HCT116 (cell line): ENCODE measurements at regions of chr1 and their contacts with region 1.

Region 1: DNA sequence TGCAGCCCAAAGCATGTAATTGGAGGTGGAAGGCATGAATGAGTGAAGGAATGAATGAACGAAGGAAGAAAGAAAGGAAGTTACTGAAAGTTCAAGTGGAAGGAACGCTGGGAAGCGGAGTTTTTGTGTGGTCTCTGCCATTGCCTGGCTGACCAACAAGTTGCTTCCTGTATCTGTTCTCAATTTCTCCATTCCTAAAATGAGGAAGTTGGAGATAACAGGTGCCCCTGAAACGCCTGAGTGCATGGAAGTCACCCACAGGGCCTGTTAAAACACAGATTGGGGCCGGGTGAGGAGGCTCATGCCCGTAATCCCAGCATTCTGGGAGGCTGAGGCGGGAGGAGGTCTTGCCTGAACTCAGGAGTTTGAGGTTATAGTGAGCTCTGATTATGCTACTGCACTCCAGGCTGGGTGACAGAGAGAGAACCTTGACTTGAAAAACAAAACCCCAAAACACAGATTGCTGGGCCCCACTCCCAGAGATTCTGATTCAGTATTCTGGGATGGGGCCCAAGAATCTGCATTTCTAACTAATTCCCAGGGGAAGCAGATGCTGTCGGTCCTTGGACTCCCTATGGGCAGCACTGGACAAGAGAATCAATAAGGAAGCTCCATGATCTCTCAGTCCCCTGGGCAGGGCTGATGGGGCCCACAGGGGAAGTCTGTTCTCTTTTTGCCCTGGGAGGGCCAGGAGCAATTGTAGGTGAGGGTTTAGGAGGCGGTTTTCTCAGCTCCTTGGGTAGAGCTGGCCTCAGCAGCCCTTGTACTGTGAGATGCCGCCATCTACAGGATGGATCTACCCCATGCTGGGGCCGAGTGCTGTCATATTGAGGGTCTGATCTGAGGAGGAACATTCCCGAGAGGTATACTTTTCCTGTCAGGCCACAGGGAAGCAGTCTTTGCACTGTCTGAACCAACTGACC is 3.3 kb upstream of the CNR2 start:
- DNase-seq: peak; percentile 81
- ATAC-seq: peak; percentile 97
- H3K4me3 ChIP-seq: no peak overlapping the region
- H3K27ac ChIP-seq: no peak overlapping the region
- H3K4me1 ChIP-seq: peaks cover 12 to 38% of the 10 kb centered on the region in 2 experiments
- H3K27me3 ChIP-seq: no peaks in the 10 kb centered on the region
- CTCF ChIP-seq: peak; percentile 80 to 82 (median 82)
- POLR2A ChIP-seq: no peak
- RAD21 ChIP-seq: peak; percentile 94

Region 2: GRCh38 chr1:23800400-23801337 is 115.8 kb before region 1 on chr1 and contains the start of gene GALE:
- CTCF ChIA-PET with region 1: interaction called, 13 read pairs
- POLR2A ChIA-PET with region 1: no interaction called
- RAD21 ChIA-PET with region 1: interaction called in 1 of 2 experiments, 4 read pairs
- intact Hi-C with region 1: loop called (anchors 5 kb)
- DNase-seq: peak; percentile 86
- ATAC-seq: peak; percentile 71
- H3K4me3 ChIP-seq: peak within 1 kb of the TSS; percentile 65 to 94
- H3K27ac ChIP-seq: peak within 1 kb of the TSS; percentile 93
- H3K4me1 ChIP-seq: peaks cover 10 to 35% of the 10 kb centered on the region in 2 experiments
- H3K27me3 ChIP-seq: no peaks in the 10 kb centered on the region
- CTCF ChIP-seq: no peak
- POLR2A ChIP-seq: peak; percentile 57
- RAD21 ChIP-seq: no peak
- total RNA-seq, gene GALE: 114 TPM